ENCODE measurements at regions of chr9 and their contacts with region 1.

Region 1: DNA sequence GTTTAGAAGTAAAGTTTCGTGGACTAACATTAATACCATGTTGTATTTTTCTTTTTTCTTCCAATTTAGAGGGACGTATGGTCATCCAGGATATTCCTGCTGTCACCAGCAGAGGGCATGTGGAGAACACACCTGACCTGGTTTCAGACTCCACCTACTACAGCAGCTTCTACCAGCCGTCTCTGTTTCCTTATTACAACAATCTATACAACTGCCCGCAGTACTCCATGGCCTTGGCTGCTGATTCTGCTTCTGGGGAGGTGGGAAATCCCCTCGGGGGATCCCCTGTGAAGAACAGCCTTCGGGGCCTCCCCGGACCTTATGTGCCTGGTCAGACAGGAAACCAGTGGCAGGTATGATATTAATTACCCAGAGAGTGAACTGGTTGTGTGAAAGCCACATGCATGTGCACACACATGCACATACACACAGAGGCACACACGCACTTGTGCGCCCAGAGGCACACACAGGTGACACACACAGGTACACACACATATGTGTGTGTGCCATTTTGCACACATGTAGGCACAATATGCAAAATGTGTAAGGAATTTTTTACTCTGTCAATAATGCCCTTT is 52.4 kb downstream of the DMRT1 start:
- DNase-seq: peak; percentile 79
- ATAC-seq: peak; percentile 99
- H3K4me3 Mint-ChIP-seq: no peak overlapping the region
- H3K27ac Mint-ChIP-seq: no peak overlapping the region
- H3K4me1 Mint-ChIP-seq: peaks cover 12% of the 10 kb centered on the region
- H3K27me3 Mint-ChIP-seq: peaks cover 13% of the 10 kb centered on the region

Region 2: DNA sequence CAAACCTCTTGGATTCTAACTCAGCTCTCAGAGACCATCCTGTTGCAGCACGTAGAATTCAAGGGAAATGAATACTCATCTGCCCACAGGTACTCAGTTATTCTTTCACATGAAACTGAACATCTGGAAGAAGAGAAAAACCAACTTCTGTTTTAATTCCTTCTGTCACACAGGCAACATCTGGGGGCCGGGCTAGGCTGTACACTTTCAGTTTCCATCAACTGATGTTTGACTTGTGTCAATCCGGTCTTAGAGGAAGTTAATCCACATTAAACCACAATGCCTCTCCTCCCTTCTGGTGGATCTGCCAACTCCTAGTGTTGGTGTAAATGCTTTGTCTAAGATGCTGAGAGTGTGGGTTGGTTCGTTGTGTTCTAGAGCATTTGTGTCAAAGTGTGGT is 100.1 kb after region 1 on chr9:
- CTCF ChIA-PET with region 1: interaction called, 8 read pairs
- POLR2A ChIA-PET with region 1: no interaction called
- intact Hi-C with region 1: loop called (anchors 1 kb)
- DNase-seq: no peak
- ATAC-seq: peak; percentile 33
- H3K4me3 Mint-ChIP-seq: no peak overlapping the region
- H3K27ac Mint-ChIP-seq: no peak overlapping the region
- H3K4me1 Mint-ChIP-seq: peaks cover 2% of the 10 kb centered on the region
- H3K27me3 Mint-ChIP-seq: peaks cover 11% of the 10 kb centered on the region

Region 3: GRCh38 chr9:1009101-1009707 is 115.3 kb after region 1 on chr9:
- CTCF ChIA-PET with region 1: interaction called, 24 read pairs
- POLR2A ChIA-PET with region 1: no interaction called
- intact Hi-C with region 1: loop called in 1 of 2 experiments (anchors 1 kb)
- DNase-seq: peak; percentile 85
- ATAC-seq: peak; percentile 98
- H3K4me3 Mint-ChIP-seq: no peak overlapping the region
- H3K27ac Mint-ChIP-seq: no peak overlapping the region
- H3K4me1 Mint-ChIP-seq: peaks cover 2% of the 10 kb centered on the region
- H3K27me3 Mint-ChIP-seq: peaks cover 36% of the 10 kb centered on the region